Heart left ventricle (tissue), 16 donors: ENCODE measurements at regions of chr4 and their contacts with region 1.

Region 1: DNA sequence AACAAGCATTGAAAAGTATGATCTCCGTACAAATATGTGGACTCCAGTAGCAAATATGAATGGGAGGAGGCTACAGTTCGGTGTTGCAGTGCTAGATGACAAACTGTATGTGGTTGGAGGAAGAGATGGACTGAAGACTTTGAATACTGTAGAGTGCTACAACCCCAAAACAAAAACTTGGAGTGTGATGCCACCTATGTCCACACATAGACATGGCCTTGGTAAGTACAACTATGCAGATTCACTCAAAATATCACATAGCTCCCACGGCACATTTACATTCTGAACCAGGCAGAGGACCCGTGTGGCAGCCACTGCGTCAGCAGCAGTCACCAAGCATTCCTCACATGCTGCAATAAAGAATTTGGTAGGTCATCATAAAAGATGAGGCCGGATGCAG is 41.3 kb downstream of the KLHL5 start:
- DNase-seq: no peak
- ATAC-seq: peak in 1 of 4 donors; percentile 24
- H3K4me3 ChIP-seq: no peak overlapping the region
- H3K27ac ChIP-seq: no peak overlapping the region
- H3K4me1 ChIP-seq: no peaks in the 10 kb centered on the region
- H3K27me3 ChIP-seq: no peaks in the 10 kb centered on the region
- CTCF ChIP-seq: no peak
- POLR2A ChIP-seq: no peak

Region 2: GRCh38 chr4:39044364-39044955 is 58.8 kb before region 1 on chr4:
- intact Hi-C with region 1: loop called in 1 of 10 experiments (anchors 5 kb)
- DNase-seq: peak; percentile 94 to 96 (median 95)
- ATAC-seq: peak; percentile 89 to 95 (median 93)
- H3K4me3 ChIP-seq: peak overlapping the region; percentile 49 to 94 (median 77)
- H3K27ac ChIP-seq: peak overlapping the region; percentile 81 to 97 (median 93)
- H3K4me1 ChIP-seq: peaks cover 0 to 56% (median 20%) of the 10 kb centered on the region in 12 donors
- H3K27me3 ChIP-seq: no peaks in the 10 kb centered on the region
- CTCF ChIP-seq: no peak
- POLR2A ChIP-seq: peak in 1 of 2 donors; percentile 21